Naive thymus-derived CD4-positive, alpha-beta T cell (primary cell): ENCODE measurements at regions of chr19 and their contacts with region 1.

Region 1: DNA sequence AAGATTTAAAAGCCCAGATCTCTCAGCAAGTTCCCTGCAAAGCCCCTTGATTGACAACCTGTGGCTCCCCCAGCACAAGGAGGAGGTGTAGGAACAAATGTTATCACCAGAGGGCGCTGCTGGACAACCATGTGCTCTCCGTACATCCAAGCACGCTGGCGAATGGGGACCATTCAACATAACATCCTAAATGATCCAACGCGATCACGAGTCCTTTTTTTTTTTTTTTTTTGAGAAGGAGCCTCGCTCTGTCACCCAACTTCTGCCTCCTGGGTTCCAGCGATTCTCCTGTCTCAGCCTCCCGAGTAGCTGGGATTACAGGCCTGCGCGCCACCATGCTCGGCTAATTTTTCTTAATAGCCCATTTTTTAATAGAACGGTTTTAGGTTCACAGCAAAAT is 52.0 kb downstream of the NWD1 start:
- DNase-seq: peak; percentile 33 to 73 (median 59)
- ATAC-seq: peak; percentile 85
- H3K4me3 ChIP-seq: no peak overlapping the region
- H3K4me3 Mint-ChIP-seq: no peak overlapping the region
- H3K27ac ChIP-seq: no peak overlapping the region
- H3K27ac Mint-ChIP-seq: no peak overlapping the region
- H3K4me1 ChIP-seq: no peaks in the 10 kb centered on the region
- H3K4me1 Mint-ChIP-seq: no peaks in the 10 kb centered on the region
- H3K27me3 ChIP-seq: no peaks in the 10 kb centered on the region
- H3K27me3 Mint-ChIP-seq: peaks cover 0 to 43% (median 34%) of the 10 kb centered on the region in 5 donors

Region 2: GRCh38 chr19:16829010-16829821 is 57.6 kb after region 1 on chr19 and contains the start of gene SIN3B:
- CTCF ChIA-PET with region 1: interaction called, 7 read pairs
- POLR2A ChIA-PET with region 1: no interaction called
- intact Hi-C with region 1: loop called in 1 of 2 experiments (anchors 5 kb)
- DNase-seq: peak; percentile 84 to 94 (median 89)
- ATAC-seq: peak; percentile 97
- H3K4me3 ChIP-seq: peak within 1 kb of the TSS; percentile 67
- H3K4me3 Mint-ChIP-seq: peak within 1 kb of the TSS; percentile 77 to 90 (median 86)
- H3K27ac ChIP-seq: peak within 1 kb of the TSS; percentile 93
- H3K27ac Mint-ChIP-seq: peak within 1 kb of the TSS; percentile 56 to 95 (median 89)
- H3K4me1 ChIP-seq: peaks cover 8% of the 10 kb centered on the region in 2 donors
- H3K4me1 Mint-ChIP-seq: peaks cover 16 to 54% (median 42%) of the 10 kb centered on the region in 7 donors
- H3K27me3 ChIP-seq: no peaks in the 10 kb centered on the region
- H3K27me3 Mint-ChIP-seq: peaks cover 11 to 27% (median 21%) of the 10 kb centered on the region in 5 donors
- total RNA-seq, gene SIN3B: 42.7 to 105 (median 102) TPM

Region 3: DNA sequence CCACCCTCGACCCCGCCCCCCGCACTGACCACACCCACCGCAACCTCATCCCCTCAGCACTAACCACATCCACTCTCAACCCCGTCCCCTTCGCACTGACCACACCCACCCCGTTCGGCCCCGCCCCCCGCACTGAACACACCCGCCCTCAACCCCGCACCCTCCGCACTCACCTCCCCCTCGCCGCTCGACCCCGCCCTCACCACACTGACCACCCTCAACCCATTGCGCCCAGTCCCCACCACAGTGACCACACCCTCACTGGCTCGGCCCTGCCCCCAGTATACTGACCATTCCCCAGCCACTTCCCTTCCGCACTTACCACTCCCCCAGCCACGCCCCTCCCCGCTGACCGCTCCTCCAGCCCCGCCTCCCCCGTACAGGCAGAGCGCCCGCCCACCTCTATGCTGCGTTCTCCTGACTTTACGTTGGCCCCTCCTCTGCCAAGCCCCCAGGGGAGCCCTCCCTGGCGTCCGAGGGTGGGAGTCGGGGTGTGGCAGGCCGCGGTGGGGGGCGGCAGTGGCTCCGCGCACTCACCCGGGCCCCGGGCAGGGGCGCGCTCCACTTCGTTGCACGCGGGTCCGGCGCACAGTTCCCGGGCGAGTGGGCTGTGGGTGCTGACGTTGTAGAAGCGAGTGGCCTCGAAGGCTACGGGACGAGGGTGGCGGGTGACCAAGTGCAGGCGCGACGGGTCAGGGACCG is 125.7 kb after region 1 on chr19:
- CTCF ChIA-PET with region 1: no interaction called
- POLR2A ChIA-PET with region 1: no interaction called
- intact Hi-C with region 1: loop called (anchors 2 kb)
- DNase-seq: peak in 7 of 9 donors; percentile 9 to 77 (median 32)
- ATAC-seq: peak; percentile 80
- H3K4me3 ChIP-seq: peak overlapping the region; percentile 50
- H3K4me3 Mint-ChIP-seq: peak overlapping the region in 9 of 10 donors; percentile 43 to 81 (median 76)
- H3K27ac ChIP-seq: no peak overlapping the region
- H3K27ac Mint-ChIP-seq: peak overlapping the region in 2 of 9 donors; percentile 47 to 77
- H3K4me1 ChIP-seq: peaks cover 0 to 5% of the 10 kb centered on the region in 2 donors
- H3K4me1 Mint-ChIP-seq: peaks cover 13 to 36% (median 22%) of the 10 kb centered on the region in 7 donors
- H3K27me3 ChIP-seq: no peaks in the 10 kb centered on the region
- H3K27me3 Mint-ChIP-seq: peaks cover 6 to 50% (median 19%) of the 10 kb centered on the region in 5 donors

Region 4: DNA sequence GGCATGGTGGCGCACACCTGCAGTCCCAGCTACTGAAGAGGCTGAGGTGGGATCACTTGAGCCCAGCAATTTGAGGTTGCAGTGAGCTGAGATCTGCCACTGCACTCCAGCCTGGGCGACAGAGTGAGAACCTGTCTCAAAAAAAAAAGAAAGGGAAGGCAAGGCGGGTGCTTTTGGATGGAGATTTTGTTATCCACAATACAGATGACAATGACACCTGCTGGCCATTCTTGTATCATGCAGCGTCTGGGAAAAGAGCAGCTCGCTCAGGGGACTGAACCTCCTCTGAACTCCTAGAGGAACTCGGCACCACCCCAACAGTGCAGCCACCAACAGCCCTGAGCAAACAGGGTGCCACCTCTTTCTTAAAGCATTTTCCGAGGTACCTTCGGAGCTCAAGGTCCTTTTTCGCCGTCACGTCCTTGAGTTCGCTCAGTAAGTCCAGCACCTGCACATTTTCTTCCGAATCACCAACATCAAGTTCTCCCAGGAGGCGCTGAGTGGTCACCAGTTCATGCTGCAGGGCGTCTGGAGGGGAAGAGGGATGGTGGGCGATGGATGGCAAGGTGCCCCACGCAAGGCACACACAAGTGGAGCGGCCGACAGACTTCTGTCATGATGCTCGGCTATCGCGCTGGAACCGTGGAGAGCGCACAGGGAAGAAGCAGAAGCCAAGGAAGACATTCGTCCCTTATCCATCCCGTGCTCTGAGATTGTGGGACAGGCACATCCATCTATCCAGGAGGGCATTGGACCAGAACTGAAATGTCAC is 281.0 kb after region 1 on chr19:
- CTCF ChIA-PET with region 1: interaction called, 8 read pairs
- POLR2A ChIA-PET with region 1: no interaction called
- intact Hi-C with region 1: loop called (anchors 1 kb)
- DNase-seq: peak in 6 of 9 donors; percentile 19 to 49 (median 34)
- ATAC-seq: peak; percentile 67
- H3K4me3 ChIP-seq: no peak overlapping the region
- H3K4me3 Mint-ChIP-seq: no peak overlapping the region
- H3K27ac ChIP-seq: no peak overlapping the region
- H3K27ac Mint-ChIP-seq: peak overlapping the region in 1 of 9 donors; percentile 19
- H3K4me1 ChIP-seq: no peaks in the 10 kb centered on the region
- H3K4me1 Mint-ChIP-seq: peaks cover 0 to 2% (median 0%) of the 10 kb centered on the region in 7 donors
- H3K27me3 ChIP-seq: no peaks in the 10 kb centered on the region
- H3K27me3 Mint-ChIP-seq: no peaks in the 10 kb centered on the region